CD8-positive, alpha-beta T cell (primary cell): ENCODE measurements at regions of chr1 and their contacts with region 1.

Region 1: GRCh38 chr1:86825319-86825718 is 88.6 kb downstream of the SELENOF start:
- DNase-seq: no peak
- ATAC-seq: no peak
- H3K4me3 ChIP-seq: no peak overlapping the region
- H3K4me3 Mint-ChIP-seq: no peak overlapping the region
- H3K27ac ChIP-seq: no peak overlapping the region
- H3K27ac Mint-ChIP-seq: no peak overlapping the region
- H3K4me1 ChIP-seq: no peaks in the 10 kb centered on the region
- H3K4me1 Mint-ChIP-seq: no peaks in the 10 kb centered on the region
- H3K27me3 ChIP-seq: no peaks in the 10 kb centered on the region
- H3K27me3 Mint-ChIP-seq: peaks cover 3% of the 10 kb centered on the region
- CTCF ChIP-seq: no peak

Region 2: DNA sequence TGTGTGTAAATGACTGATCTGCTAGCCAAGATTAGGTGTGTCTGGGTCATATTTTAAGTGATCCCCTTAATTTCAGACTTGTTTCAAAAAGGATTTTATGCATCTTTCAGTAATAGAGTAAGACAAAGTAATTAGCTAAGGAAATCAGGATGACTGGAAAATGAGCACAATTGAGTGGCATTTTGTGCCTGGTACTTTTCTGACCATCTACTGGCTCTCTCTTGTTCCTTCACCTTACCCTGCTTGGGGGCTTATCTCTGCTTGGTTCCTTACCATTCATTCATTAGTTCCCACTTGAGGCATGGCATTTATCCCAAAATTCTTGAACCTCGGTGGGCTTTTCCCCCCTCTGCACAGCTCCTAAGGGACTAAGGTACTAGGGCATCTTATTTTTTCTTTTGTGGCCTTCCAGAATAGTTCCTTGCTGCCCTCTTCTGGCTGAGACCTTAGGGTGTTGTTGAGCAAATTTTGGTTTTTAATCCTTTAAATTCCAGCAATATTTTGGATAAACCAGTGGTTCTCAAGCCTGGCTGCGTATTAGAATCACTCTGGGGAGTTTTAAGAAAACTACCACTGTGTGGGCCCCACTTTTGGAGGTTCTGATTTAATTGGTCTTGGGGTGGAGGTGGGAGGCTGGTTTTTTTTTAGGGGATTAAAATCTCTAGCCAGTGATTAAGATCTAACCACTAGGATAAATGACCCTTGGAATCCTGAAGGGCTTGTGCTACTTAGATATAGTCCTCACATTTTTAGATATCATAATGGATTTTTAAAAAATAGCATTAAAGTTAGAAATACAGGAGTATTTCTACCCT is 139.9 kb after region 1 on chr1:
- CTCF ChIA-PET with region 1: interaction called, 10 read pairs
- POLR2A ChIA-PET with region 1: no interaction called
- intact Hi-C with region 1: no loop called
- DNase-seq: peak in 4 of 9 experiments; percentile 13 to 53 (median 31)
- ATAC-seq: no peak
- H3K4me3 ChIP-seq: no peak overlapping the region
- H3K4me3 Mint-ChIP-seq: no peak overlapping the region
- H3K27ac ChIP-seq: no peak overlapping the region
- H3K27ac Mint-ChIP-seq: no peak overlapping the region
- H3K4me1 ChIP-seq: no peaks in the 10 kb centered on the region
- H3K4me1 Mint-ChIP-seq: no peaks in the 10 kb centered on the region
- H3K27me3 ChIP-seq: no peaks in the 10 kb centered on the region
- H3K27me3 Mint-ChIP-seq: no peaks in the 10 kb centered on the region
- CTCF ChIP-seq: peak; percentile 52